Activated CD4-positive, alpha-beta memory T cell treated with anti-CD3 and anti-CD28 coated beads, Interleukin-2, amount 10 ng/mL, durations not matched to agents 7 days and 5 days (primary cell): ENCODE measurements at regions of chr19 and their contacts with region 1.

Region 1: GRCh38 chr19:11528551-11529341 is at the start of gene ECSIT:
- DNase-seq: peak; percentile 94
- H3K4me3 Mint-ChIP-seq: peak within 1 kb of the TSS; percentile 98
- H3K27ac Mint-ChIP-seq: peak within 1 kb of the TSS; percentile 89
- H3K4me1 Mint-ChIP-seq: peaks cover 23% of the 10 kb centered on the region
- H3K27me3 Mint-ChIP-seq: no peaks in the 10 kb centered on the region
- total RNA-seq, gene ECSIT: 24.8 to 26.8 TPM

Region 2: DNA sequence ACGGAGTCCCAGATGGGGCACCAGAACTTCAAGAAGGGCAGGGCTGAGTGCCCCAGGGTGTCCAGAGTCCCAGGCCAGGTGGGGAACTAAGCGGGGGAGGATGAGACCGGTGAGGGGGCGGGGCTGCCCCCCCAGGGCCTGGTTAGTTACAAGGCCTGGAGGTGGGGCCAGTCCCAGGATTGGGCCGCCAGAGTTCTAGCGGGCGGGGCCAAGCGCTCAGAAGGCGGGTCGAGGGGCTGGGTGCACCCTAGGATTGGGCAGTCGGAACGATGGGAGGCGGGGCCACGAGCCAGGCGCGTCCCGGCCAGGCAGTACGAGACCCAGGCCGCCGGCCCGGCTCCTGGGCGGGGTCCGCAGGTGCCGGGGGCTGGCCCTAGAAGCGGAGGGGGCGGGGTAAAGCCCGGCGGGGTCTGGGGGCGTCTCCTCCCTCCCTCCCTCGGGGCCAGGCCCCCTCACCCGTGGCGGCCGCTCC is 23.7 kb before region 1 on chr19:
- CTCF ChIA-PET with region 1: interaction called, 3 read pairs
- POLR2A ChIA-PET with region 1: interaction called, 11 read pairs
- DNase-seq: peak; percentile 97
- H3K4me3 Mint-ChIP-seq: peak overlapping the region; percentile 81
- H3K27ac Mint-ChIP-seq: peak overlapping the region; percentile 75
- H3K4me1 Mint-ChIP-seq: peaks cover 22% of the 10 kb centered on the region
- H3K27me3 Mint-ChIP-seq: no peaks in the 10 kb centered on the region

Region 3: DNA sequence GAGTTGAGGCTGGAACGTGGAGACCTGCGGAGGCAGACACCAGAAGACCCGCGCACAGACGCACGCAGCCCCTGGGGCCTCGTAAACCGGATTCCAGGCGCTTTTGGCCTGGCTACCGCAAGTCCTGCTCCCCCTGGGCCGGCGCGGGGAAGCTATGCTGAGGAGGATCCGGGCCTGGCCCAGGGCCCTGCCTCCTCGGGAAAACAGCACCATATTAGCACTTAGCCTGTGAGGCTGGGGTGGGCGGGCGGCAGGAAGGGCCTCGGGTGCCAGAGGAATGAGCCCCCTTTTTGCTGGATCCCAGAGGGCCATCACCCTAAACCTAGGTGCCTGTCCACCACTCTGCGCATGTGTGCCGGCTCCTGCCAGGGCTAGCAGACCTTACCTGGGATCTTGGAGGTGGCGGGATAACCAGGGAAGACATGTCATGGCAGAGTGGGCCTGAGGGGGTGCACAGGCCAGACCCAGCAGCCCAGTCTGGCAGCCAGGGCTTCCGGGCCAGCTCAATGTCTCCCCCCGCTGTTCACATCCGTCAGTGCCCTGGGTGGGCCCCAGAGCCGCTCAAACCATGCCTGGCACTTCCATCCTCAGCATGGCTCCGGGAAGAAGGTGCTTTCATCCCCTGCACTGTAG is 23.0 kb after region 1 on chr19:
- CTCF ChIA-PET with region 1: no interaction called
- POLR2A ChIA-PET with region 1: no interaction called
- DNase-seq: no peak
- H3K4me3 Mint-ChIP-seq: no peak overlapping the region
- H3K27ac Mint-ChIP-seq: no peak overlapping the region
- H3K4me1 Mint-ChIP-seq: peaks cover 20% of the 10 kb centered on the region
- H3K27me3 Mint-ChIP-seq: no peaks in the 10 kb centered on the region